ENCODE measurements at regions of chr1 and their contacts with region 1.

Region 1: GRCh38 chr1:232278925-232279324 is 351.0 kb downstream of the SIPA1L2 start:
- DNase-seq: no peak
- H3K4me3 ChIP-seq: no peak overlapping the region
- H3K27ac ChIP-seq: no peak overlapping the region
- H3K4me1 ChIP-seq: no peaks in the 10 kb centered on the region
- H3K27me3 ChIP-seq: no peaks in the 10 kb centered on the region
- CTCF ChIP-seq: no peak
- POLR2A ChIP-seq: no peak

Region 2: GRCh38 chr1:232306269-232306961 is 27.5 kb after region 1 on chr1:
- intact Hi-C with region 1: loop called (anchors 1 kb)
- DNase-seq: peak; percentile 64 to 73
- H3K4me3 ChIP-seq: no peak overlapping the region
- H3K27ac ChIP-seq: peak overlapping the region; percentile 29 to 66
- H3K4me1 ChIP-seq: no peaks in the 10 kb centered on the region
- H3K27me3 ChIP-seq: no peaks in the 10 kb centered on the region
- CTCF ChIP-seq: peak in 2 of 3 donors; percentile 17 to 18
- POLR2A ChIP-seq: no peak

Region 3: GRCh38 chr1:232316864-232317263 is 37.9 kb after region 1 on chr1:
- intact Hi-C with region 1: loop called (anchors 1 kb)
- DNase-seq: no peak
- H3K4me3 ChIP-seq: no peak overlapping the region
- H3K27ac ChIP-seq: no peak overlapping the region
- H3K4me1 ChIP-seq: no peaks in the 10 kb centered on the region
- H3K27me3 ChIP-seq: no peaks in the 10 kb centered on the region
- CTCF ChIP-seq: no peak
- POLR2A ChIP-seq: no peak

Measured in breast epithelium (tissue), 4 donors.